IMR-90 (cell line): ENCODE measurements at regions of chr5 and their contacts with region 1.

Region 1: GRCh38 chr5:10264604-10265003 is 14.5 kb downstream of the CCT5 start:
- DNase-seq: peak; percentile 41
- ATAC-seq: peak; percentile 32; the same call in 1 of the 2 replicates
- H3K4me3 ChIP-seq: no peak overlapping the region
- H3K27ac ChIP-seq: no peak overlapping the region
- H3K4me1 ChIP-seq: peaks cover 4% of the 10 kb centered on the region; the same call in 1 of the 2 replicates
- H3K27me3 ChIP-seq: no peaks in the 10 kb centered on the region
- CTCF ChIP-seq: no peak
- POLR2A ChIP-seq: no peak
- RAD21 ChIP-seq: no peak

Region 2: GRCh38 chr5:10106806-10107205 is 157.8 kb before region 1 on chr5:
- CTCF ChIA-PET with region 1: no interaction called
- POLR2A ChIA-PET with region 1: no interaction called
- dilution Hi-C with region 1: no loop called
- in situ Hi-C with region 1: no loop called
- intact Hi-C with region 1: no loop called
- DNase-seq: peak; percentile 23
- ATAC-seq: 0 out of 2 replicates have a peak, but pooled peaks have one; percentile 48
- H3K4me3 ChIP-seq: no peak overlapping the region
- H3K27ac ChIP-seq: no peak overlapping the region
- H3K4me1 ChIP-seq: no peaks in the 10 kb centered on the region
- H3K27me3 ChIP-seq: no peaks in the 10 kb centered on the region; the same call in 1 of the 2 replicates
- CTCF ChIP-seq: no peak
- POLR2A ChIP-seq: no peak
- RAD21 ChIP-seq: no peak

Region 3: DNA sequence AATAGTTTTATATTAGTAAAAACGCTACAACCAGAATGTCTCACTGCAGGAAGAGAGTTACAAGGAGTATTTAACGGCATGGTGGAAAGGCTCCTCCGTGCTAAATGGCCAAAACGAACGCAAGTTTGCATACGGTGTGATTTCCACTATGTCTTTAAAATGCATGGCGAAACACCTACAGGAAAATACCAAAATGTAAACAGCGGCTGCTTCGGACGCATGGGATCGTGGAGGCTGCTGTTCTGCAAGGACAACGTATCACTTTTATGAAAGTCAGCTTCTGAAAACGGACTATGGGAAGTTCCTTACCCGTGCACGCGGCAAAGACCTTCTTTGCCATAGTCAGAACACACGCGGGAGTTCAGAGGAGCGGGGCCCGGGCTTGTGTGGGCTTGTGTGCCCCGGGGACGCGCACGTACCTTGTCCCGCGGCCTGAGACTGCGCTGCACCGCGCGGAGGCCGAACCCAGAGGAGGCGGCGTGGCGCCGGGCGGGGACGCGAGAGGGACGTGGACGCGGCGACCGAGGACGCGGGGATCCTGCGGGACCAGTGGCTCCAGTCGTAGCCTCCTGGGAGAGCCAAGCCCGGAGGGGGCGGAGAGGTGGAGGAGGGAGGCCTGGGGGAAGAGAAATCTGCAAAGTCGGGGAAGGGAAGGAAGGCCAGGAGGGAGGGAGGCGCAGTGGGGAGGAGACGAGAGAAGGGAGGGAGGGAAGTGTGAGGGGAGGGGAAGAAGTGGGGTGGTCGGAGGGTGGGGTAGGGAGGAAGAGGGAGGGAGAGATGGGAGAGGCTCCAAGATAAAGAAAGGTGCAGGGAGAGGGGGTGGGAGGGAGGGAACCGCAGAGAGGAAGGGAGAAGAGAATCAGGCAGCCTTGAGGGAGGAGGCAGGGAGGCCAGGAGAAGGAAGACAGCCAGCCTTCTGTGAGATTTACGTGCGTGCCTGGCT is 42.9 kb after region 1 on chr5 and contains the start of gene CMBL:
- CTCF ChIA-PET with region 1: no interaction called
- POLR2A ChIA-PET with region 1: no interaction called
- dilution Hi-C with region 1: no loop called
- in situ Hi-C with region 1: no loop called
- intact Hi-C with region 1: loop called (anchors 1 kb)
- DNase-seq: peak; percentile 48
- ATAC-seq: peak; percentile 92
- H3K4me3 ChIP-seq: peak within 1 kb of the TSS; percentile 82
- H3K27ac ChIP-seq: peak within 1 kb of the TSS; percentile 90
- H3K4me1 ChIP-seq: peaks cover 8% of the 10 kb centered on the region
- H3K27me3 ChIP-seq: no peaks in the 10 kb centered on the region
- CTCF ChIP-seq: no peak
- POLR2A ChIP-seq: no peak
- RAD21 ChIP-seq: no peak
- total RNA-seq, gene CMBL: 5.0 and 5.8 TPM in 2 replicates

Region 4: GRCh38 chr5:10387690-10388089 is 123.1 kb after region 1 on chr5:
- CTCF ChIA-PET with region 1: no interaction called
- POLR2A ChIA-PET with region 1: no interaction called
- dilution Hi-C with region 1: no loop called
- in situ Hi-C with region 1: no loop called
- intact Hi-C with region 1: no loop called
- DNase-seq: peak; percentile 91
- ATAC-seq: peak; percentile 88
- H3K4me3 ChIP-seq: no peak overlapping the region
- H3K27ac ChIP-seq: no peak overlapping the region
- H3K4me1 ChIP-seq: peaks cover 8% of the 10 kb centered on the region
- H3K27me3 ChIP-seq: no peaks in the 10 kb centered on the region
- CTCF ChIP-seq: no peak
- POLR2A ChIP-seq: no peak
- RAD21 ChIP-seq: no peak